ENCODE measurements at regions of chr2 and their contacts with region 1.

Region 1: GRCh38 chr2:203484266-203485112 is 50.6 kb downstream of the RAPH1 start:
- DNase-seq: peak; percentile 38
- H3K4me3 ChIP-seq: no peak overlapping the region
- H3K27ac ChIP-seq: no peak overlapping the region
- H3K4me1 ChIP-seq: peaks cover 0 to 3% (median 0%) of the 10 kb centered on the region in 4 donors
- H3K27me3 ChIP-seq: no peaks in the 10 kb centered on the region
- CTCF ChIP-seq: peak; percentile 51 to 60 (median 59)
- EP300 ChIP-seq: no peak
- POLR2A ChIP-seq: no peak

Region 2: DNA sequence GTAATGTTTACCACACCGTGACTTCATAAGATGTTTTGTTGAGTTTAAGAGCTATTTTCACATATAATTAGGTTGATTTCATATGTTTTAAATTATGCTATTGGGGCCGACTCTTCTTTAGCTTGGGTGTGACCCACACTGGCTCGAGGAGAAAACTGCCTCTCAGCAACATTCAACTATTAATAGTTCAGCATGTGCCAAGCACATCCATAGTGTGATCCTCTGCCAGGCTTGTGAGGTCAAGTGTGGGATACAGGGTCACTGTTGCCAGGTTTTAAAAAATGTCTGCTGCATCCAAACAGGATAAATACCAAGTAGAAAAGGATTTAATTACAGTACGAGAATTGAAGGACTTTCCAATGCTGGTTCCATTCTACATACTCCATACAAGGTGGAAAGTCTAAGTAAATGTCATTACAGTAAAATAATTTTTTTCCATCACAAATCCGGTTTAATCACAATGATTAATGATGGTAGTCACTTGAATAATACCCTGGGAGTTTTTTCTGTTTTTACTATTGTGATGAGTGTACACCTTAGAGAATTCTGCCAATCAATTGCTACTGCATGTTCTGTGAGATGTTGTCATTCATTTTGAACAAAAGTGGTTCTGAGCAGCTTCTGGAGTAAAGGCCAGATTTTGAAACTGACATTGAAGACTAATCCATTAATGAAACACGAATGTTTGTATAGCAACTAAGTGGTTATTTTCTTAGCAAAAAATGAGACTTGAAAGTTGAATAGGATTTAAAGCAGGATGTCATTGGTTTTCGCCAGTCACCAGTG is 71.8 kb before region 1 on chr2:
- in situ Hi-C with region 1: no loop called
- intact Hi-C with region 1: no loop called
- DNase-seq: no peak
- H3K4me3 ChIP-seq: no peak overlapping the region
- H3K27ac ChIP-seq: no peak overlapping the region
- H3K4me1 ChIP-seq: no peaks in the 10 kb centered on the region
- H3K27me3 ChIP-seq: no peaks in the 10 kb centered on the region
- CTCF ChIP-seq: no peak
- EP300 ChIP-seq: no peak
- POLR2A ChIP-seq: no peak

Region 3: DNA sequence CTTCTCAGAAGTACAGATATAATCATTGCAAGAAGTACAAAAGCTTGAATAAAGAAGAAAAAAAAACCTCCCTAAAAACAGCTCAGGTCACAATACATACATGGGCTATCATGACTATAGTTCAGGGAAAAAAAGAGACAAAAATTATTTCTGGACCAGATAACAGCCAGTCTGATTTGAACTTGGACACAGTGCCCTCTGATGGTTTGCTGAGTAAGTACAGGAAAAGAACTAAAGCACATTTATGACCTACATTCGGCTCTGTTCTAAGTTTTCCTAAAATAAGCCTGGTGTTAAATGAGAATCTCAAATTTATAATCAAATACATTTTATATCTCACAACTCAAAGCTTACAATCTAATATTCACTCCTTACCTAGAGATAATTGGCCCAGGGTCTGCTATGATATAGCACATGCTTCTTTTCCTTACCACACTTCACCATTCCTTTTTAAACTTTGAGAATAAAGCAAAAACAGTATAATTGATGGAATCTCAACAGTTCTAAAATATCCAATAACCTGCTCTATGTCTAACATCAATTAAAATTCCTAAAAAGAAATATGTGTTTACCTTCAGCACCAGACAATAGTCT is 30.5 kb before region 1 on chr2:
- in situ Hi-C with region 1: no loop called
- intact Hi-C with region 1: loop called (anchors 2 kb)
- DNase-seq: no peak
- H3K4me3 ChIP-seq: no peak overlapping the region
- H3K27ac ChIP-seq: peak overlapping the region in 2 of 4 donors; percentile 29 to 68
- H3K4me1 ChIP-seq: peaks cover 0 to 36% (median 24%) of the 10 kb centered on the region in 4 donors
- H3K27me3 ChIP-seq: no peaks in the 10 kb centered on the region
- CTCF ChIP-seq: peak; percentile 59 to 78 (median 67)
- EP300 ChIP-seq: no peak
- POLR2A ChIP-seq: no peak

Region 4: DNA sequence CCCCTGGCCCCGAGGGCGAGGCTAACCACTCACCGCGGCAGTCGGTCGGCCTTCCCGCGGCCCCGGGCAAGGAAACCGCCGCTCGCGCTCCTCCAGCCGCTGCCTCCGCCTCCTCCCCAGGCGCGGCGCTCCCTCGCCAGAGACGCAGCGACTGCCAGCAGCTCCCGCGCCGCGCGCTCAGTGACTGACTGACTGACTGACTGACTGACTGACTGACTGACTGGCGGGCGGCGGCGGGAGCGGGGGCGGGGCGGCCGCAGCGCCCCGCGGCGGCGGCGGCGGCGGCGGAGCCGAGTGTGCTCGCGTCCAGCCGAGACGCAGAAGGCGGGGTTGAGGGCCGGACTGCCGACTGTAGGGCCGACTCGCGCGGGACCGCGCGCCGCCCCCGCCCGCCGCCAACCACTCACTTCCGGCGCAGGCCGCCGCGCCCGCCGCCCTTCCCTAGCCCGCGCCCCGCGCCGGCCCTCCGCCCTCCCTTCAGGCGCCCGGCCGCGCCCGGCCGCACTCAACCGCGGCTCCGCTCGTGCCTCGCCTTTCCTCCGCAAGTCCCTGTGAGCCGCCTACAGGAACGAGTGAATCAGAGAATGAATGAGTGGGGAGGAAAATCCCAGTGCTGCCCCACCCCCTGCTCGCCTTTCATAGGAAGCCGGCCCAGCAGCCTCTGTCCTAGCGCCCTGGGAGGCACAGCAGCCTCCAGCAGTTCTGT is 50.7 kb after region 1 on chr2 and contains the start of gene RAPH1:
- in situ Hi-C with region 1: no loop called
- intact Hi-C with region 1: no loop called
- DNase-seq: peak; percentile 90
- H3K4me3 ChIP-seq: peak within 1 kb of the TSS; percentile 75 to 95 (median 79)
- H3K27ac ChIP-seq: peak within 1 kb of the TSS; percentile 93 to 97 (median 94)
- H3K4me1 ChIP-seq: peaks cover 4 to 21% (median 15%) of the 10 kb centered on the region in 4 donors
- H3K27me3 ChIP-seq: no peaks in the 10 kb centered on the region
- CTCF ChIP-seq: no peak
- EP300 ChIP-seq: no peak
- POLR2A ChIP-seq: peak; percentile 69
- total RNA-seq, gene RAPH1: 36.0 to 160 (median 41.8) TPM

Region 5: GRCh38 chr2:203578759-203579643 is 94.5 kb after region 1 on chr2:
- in situ Hi-C with region 1: no loop called
- intact Hi-C with region 1: no loop called
- DNase-seq: peak; percentile 80
- H3K4me3 ChIP-seq: no peak overlapping the region
- H3K27ac ChIP-seq: peak overlapping the region; percentile 79 to 87 (median 84)
- H3K4me1 ChIP-seq: peaks cover 15 to 56% (median 51%) of the 10 kb centered on the region in 4 donors
- H3K27me3 ChIP-seq: no peaks in the 10 kb centered on the region
- CTCF ChIP-seq: peak in 2 of 5 experiments; percentile 7 to 18
- EP300 ChIP-seq: peak; percentile 84
- POLR2A ChIP-seq: no peak

Region 6: DNA sequence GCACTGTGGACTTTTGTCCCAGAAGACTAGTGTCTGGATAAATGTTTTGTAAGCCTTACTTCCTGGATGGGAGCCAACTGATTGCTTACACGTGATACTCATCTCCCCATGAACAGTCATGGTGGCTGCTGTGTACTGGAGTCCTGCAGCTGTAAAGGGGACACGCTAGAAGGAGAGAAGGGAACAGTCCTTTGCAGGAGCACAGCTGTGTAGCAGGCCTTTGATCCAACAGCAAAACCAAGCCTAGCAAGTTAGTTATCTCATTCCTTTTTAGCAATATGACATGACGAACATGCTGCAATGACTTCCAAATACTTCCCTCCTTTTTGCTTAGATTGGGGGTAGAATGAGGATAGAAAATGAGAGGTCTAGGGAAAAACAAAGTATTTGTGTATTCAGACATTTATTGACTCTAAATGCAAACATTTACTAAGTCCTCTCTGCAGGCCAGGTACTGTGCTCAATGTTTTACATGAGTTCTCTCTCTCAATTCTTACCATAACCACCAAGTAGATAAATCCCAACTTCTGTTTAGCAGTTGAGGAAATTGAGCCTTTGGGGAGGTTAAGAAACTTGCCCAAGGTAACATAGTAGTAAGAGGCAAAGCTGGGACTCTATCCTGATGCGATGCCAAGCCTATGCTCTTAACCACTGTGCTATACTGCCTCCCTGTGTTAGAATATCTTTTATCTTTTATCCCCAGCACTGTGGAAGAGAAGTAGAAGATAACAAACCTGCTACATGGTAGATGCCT is 166.5 kb after region 1 on chr2:
- in situ Hi-C with region 1: loop called in 1 of 4 experiments (anchors 25 kb)
- intact Hi-C with region 1: loop called (anchors 5 kb)
- DNase-seq: peak; percentile 69
- H3K4me3 ChIP-seq: no peak overlapping the region
- H3K27ac ChIP-seq: peak overlapping the region; percentile 83 to 89 (median 86)
- H3K4me1 ChIP-seq: peaks cover 20 to 44% (median 36%) of the 10 kb centered on the region in 4 donors
- H3K27me3 ChIP-seq: no peaks in the 10 kb centered on the region
- CTCF ChIP-seq: peak; percentile 36 to 63 (median 44)
- EP300 ChIP-seq: no peak
- POLR2A ChIP-seq: no peak

Region 7: GRCh38 chr2:203706403-203706802 is 221.9 kb after region 1 on chr2 and contains the start of gene CD28:
- in situ Hi-C with region 1: no loop called
- intact Hi-C with region 1: no loop called
- DNase-seq: peak; percentile 84
- H3K4me3 ChIP-seq: peak within 1 kb of the TSS in 1 of 4 donors; percentile 16
- H3K27ac ChIP-seq: peak within 1 kb of the TSS; percentile 6 to 58 (median 49)
- H3K4me1 ChIP-seq: no peaks in the 10 kb centered on the region
- H3K27me3 ChIP-seq: no peaks in the 10 kb centered on the region
- CTCF ChIP-seq: no peak
- EP300 ChIP-seq: no peak
- POLR2A ChIP-seq: peak; percentile 59
- total RNA-seq, gene CD28: 0.68 to 2.4 (median 1.5) TPM in 3 of 4 donors, not detected in the other

Region 8: DNA sequence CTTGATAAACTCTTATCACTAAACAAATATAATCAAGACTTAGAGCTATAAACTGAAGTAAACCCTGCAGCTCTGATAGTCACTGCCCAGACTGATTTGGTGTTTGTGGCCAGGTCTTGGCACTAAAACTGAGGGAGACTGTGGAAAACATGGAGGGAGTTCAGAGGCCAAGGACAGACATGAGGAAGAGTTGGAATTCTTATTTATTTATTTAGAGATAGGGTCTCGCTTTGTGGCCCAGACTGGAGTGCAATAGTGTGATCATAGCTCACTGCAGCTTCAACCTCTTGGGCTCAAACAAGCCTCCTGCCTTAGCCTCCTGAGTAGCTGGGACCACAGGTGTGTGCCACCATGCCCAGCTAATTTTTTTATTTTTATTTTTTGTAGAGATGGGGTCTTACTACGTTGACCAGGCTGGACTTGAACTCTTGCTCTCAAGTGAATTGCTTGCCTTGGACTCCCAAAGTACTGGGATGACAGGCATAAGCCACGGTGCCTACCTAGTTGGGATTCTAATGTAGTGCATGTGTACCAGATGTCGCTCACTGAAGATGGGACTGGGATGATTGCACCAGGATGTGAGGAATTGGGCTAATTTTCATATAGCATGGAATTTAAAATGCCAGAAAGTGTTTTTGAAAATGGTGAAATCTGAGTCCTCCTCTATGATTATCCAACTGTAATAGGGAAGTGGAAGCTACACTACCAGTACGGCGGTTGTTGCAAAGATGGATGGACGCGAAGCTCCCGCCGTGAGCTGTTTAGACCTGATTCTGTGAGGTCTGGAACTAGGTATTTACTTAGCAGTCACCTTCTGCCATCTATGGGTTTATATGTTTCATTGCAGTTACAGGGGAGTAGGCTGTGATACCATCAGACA is 330.4 kb after region 1 on chr2:
- in situ Hi-C with region 1: loop called (anchors 5 to 25 kb)
- intact Hi-C with region 1: no loop called
- DNase-seq: peak; percentile 71
- H3K4me3 ChIP-seq: no peak overlapping the region
- H3K27ac ChIP-seq: peak overlapping the region; percentile 64 to 70 (median 68)
- H3K4me1 ChIP-seq: peaks cover 10 to 59% (median 35%) of the 10 kb centered on the region in 4 donors
- H3K27me3 ChIP-seq: no peaks in the 10 kb centered on the region
- CTCF ChIP-seq: peak; percentile 69 to 91 (median 76)
- EP300 ChIP-seq: no peak
- POLR2A ChIP-seq: no peak

Region 9: GRCh38 chr2:203909261-203909967 is 424.9 kb after region 1 on chr2:
- in situ Hi-C with region 1: loop called in 2 of 4 experiments (anchors 10 to 25 kb)
- intact Hi-C with region 1: no loop called
- DNase-seq: peak; percentile 11
- H3K4me3 ChIP-seq: peak overlapping the region in 1 of 4 donors; percentile 25
- H3K27ac ChIP-seq: peak overlapping the region in 2 of 4 donors; percentile 19 to 44
- H3K4me1 ChIP-seq: peaks cover 0 to 20% (median 11%) of the 10 kb centered on the region in 4 donors
- H3K27me3 ChIP-seq: no peaks in the 10 kb centered on the region
- CTCF ChIP-seq: peak; percentile 64 to 78 (median 72)
- EP300 ChIP-seq: no peak
- POLR2A ChIP-seq: no peak

Measured in transverse colon (tissue), 4 donors.